ENCODE measurements at regions of chr22 and their contacts with region 1.

Region 1: DNA sequence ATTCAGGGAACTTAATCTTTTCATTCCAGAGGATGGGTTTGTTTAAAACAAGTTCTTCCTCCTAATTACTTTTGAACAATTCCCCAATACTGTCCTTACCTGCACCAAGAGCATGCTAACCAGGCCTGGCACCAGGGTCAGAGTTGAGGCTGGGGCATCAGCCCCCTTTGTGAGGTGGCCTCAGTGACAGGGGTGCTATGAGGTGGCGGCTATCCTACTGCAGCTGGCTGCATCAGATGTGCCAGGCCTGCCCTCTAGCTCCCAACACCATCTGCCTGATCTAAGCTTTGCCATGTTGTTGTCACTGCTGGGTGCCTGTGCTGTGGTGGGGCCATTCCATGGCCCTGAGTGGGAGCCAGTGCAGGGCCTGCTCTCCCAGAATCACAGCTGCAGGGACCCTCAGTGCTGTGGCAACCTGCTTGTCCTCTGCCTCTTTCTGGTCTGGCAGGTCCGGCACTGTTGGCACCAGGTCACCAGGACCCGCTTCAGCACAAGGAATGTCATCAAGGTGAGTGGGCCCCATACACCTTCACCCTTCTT is 1.7 kb upstream of the SNU13 start:
- DNase-seq: no peak
- H3K4me3 ChIP-seq: no peak overlapping the region
- H3K27ac ChIP-seq: no peak overlapping the region
- H3K4me1 ChIP-seq: peaks cover 30% of the 10 kb centered on the region
- H3K27me3 ChIP-seq: no peaks in the 10 kb centered on the region
- CTCF ChIP-seq: no peak
- POLR2A ChIP-seq: no peak

Region 2: GRCh38 chr22:41603873-41604332 is 86.5 kb before region 1 on chr22:
- intact Hi-C with region 1: no loop called
- DNase-seq: no peak
- H3K4me3 ChIP-seq: no peak overlapping the region
- H3K27ac ChIP-seq: no peak overlapping the region
- H3K4me1 ChIP-seq: peaks cover 3% of the 10 kb centered on the region
- H3K27me3 ChIP-seq: no peaks in the 10 kb centered on the region
- CTCF ChIP-seq: no peak
- POLR2A ChIP-seq: no peak

Region 3: GRCh38 chr22:41666661-41667258 is 23.6 kb before region 1 on chr22:
- intact Hi-C with region 1: loop called (anchors 2 kb)
- DNase-seq: peak in 1 of 2 donors; percentile 89
- H3K4me3 ChIP-seq: peak overlapping the region; percentile 44 to 49
- H3K27ac ChIP-seq: peak overlapping the region; percentile 97
- H3K4me1 ChIP-seq: peaks cover 19% of the 10 kb centered on the region
- H3K27me3 ChIP-seq: no peaks in the 10 kb centered on the region
- CTCF ChIP-seq: peak; percentile 88 to 97 (median 93)
- POLR2A ChIP-seq: peak in 1 of 2 donors; percentile 68

Region 4: DNA sequence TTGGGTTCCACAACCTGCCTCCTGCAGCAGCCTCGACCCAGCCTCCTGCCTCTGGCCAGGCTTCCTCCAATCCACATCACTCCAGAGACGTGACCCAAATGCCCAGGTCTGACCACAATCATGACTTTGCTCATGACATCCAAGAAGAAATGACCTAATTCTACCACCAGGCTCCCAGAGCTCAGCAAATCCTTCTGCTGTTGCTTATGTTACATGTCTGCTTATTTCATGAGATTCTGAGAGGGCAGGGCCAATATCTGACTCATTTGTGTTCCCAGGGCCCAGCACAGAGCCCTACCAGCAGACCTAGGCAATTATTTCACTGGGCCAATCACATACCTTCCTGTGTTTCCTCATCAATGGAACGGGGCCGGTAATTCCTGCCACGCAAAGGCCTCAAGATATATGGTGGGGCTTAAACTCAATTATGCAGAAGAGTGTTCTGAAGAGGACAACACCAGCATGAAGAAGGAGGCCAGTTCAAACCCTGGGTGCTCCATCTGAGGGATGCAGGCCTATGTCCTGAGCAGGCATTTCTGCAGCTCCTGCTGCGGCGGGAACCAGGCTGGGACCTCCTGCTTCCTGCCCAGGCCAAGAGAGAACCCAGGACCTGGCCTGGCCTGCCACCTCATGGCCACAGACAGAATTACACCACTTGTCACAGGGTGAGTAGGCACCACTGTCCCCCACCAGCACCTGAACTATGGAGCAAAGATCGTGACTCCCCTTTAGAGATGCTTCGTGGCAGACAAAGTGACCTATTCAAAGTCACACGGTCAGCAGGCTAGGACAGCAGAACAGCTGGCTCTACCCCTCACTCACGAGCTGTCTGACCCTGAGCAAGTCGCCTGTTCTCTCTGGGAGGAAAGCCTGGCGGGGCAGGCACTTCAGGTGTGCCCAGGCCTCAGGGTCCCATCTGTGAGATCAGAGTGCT is 250.7 kb after region 1 on chr22:
- intact Hi-C with region 1: loop called (anchors 2 kb)
- DNase-seq: no peak
- H3K4me3 ChIP-seq: no peak overlapping the region
- H3K27ac ChIP-seq: peak overlapping the region; percentile 49
- H3K4me1 ChIP-seq: peaks cover 16% of the 10 kb centered on the region
- H3K27me3 ChIP-seq: no peaks in the 10 kb centered on the region
- CTCF ChIP-seq: peak; percentile 70 to 98 (median 89)
- POLR2A ChIP-seq: no peak